Left ventricle myocardium inferior (tissue), 1 donor: ENCODE measurements at regions of chr20 and their contacts with region 1.

Region 1: DNA sequence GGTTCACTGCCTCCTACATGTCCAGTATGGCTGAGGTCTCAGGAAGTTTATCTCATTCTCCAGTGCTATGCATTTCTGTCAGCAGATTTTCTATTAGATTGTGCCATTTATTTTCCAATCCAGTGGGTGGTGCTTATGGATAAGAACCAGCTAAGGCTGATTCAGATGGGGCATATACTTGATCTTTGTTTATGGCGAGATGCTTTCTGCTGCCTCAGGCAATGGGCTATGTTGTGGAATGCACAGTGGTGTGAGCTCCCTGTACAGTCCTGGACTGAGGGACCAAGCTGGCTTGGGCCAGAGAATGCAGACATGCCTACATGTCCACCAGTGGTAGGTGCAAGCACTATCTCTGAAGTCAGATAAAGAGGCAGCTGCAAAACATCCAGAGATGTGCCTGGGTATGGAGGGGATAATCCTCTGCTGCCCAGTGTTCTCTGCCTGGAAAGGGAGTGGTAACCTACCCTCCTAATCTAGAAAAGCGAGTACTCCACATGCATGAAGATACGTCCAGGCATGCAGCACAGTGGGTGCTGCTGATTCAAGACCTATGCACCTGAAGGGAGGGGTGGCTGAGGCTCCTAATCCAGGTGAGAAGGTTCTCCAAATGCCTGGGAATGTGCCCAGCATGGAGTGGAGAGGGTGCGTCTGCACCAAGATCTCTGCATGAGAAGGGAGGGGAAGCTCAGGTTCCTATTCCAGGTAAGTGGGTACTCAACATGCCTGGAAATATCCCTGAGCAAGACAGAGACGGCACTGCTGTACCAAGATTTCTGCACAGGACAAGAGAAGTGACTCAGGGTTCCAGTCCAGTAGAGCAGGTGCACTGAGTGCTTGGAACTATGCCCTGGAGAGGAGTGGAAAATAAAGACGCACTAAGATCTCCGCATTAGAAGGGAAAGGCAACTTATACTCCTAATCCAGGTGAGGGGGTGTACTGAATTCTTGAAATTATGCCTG is 9.4 kb downstream of the CST4 start:
- DNase-seq: no peak
- H3K4me3 ChIP-seq: no peak overlapping the region
- H3K27ac ChIP-seq: no peak overlapping the region
- H3K4me1 ChIP-seq: no peaks in the 10 kb centered on the region
- H3K27me3 ChIP-seq: no peaks in the 10 kb centered on the region
- CTCF ChIP-seq: no peak

Region 2: DNA sequence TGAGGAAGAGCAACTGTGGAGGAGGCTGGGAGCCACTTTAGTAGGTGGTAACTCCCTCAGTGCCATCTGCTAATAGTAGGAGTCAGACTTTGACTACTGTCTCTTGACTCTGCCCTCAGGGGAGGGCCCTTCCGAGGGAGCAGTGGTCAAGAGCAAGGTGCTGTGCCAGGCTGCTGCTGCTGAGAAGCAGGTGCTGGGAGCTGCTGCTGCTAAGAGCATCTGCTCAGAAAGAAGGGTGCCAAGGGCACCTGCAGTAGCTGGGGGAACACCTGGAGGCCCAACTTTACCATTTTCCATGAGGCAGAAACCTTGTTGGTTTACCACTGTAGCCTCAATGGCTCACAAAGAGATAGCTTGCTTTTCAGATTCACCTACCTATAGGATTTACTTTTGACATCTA is 290.6 kb after region 1 on chr20:
- intact Hi-C with region 1: loop called (anchors 10 kb)
- DNase-seq: no peak
- H3K4me3 ChIP-seq: no peak overlapping the region
- H3K27ac ChIP-seq: no peak overlapping the region
- H3K4me1 ChIP-seq: peaks cover 19% of the 10 kb centered on the region
- H3K27me3 ChIP-seq: peaks cover 7% of the 10 kb centered on the region
- CTCF ChIP-seq: no peak